ENCODE measurements at regions of chr5 and their contacts with region 1.

Region 1: DNA sequence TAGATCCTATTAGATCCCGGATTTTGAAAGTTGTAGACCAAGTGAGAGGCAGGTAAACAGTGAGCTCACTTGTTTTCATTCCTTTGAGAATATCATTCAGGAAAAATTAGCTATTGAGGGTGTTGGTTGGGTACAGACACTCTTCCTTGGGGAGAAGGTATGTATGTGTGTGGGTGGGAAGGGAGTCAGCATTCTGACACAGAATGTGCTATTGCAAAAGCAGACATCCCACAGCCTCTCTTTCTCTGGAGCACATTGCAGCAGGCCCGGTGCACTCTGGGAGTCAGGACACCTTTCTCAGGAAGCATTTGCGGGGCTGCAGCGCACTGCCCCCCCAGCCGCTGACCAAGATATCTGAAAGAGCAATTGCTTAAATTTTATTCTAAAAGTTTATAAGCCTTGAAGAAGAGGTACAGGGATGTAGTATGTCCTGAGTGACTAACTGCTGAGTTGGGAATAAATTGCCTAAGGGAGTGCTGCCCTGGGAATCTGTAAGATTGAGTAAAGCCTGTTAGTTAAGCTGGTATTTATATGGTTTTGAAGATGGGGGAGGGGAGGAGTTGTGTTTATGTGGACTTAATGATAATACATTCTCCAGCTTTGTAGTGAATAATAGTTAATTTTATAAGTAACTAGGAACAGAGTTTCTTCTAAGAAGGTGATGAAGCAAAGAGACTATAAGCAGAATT is 5.2 kb downstream of the TNFAIP8 start:
- DNase-seq: no peak
- CTCF ChIP-seq: no peak

Region 2: DNA sequence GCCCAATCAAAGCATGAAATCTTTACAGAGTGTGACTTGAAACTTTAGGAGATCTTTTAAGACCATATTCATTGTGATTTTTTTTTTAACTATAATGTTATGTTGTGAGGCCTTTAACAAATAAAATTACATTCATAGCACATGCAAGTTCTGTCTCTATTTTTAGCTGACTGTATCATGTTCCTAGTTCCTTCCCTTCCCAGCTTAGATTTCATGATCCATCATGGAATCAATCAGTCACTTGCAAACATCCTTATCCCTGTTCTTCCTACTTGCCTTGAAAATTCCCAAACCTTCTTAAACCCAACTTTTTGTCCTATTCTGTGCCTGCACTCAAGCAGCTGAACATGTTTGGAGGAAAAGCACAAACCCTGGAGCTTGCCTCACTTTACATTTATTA is 148.4 kb before region 1 on chr5:
- CTCF ChIA-PET with region 1: no interaction called
- POLR2A ChIA-PET with region 1: interaction called, 10 read pairs
- DNase-seq: no peak
- CTCF ChIP-seq: no peak

Region 3: DNA sequence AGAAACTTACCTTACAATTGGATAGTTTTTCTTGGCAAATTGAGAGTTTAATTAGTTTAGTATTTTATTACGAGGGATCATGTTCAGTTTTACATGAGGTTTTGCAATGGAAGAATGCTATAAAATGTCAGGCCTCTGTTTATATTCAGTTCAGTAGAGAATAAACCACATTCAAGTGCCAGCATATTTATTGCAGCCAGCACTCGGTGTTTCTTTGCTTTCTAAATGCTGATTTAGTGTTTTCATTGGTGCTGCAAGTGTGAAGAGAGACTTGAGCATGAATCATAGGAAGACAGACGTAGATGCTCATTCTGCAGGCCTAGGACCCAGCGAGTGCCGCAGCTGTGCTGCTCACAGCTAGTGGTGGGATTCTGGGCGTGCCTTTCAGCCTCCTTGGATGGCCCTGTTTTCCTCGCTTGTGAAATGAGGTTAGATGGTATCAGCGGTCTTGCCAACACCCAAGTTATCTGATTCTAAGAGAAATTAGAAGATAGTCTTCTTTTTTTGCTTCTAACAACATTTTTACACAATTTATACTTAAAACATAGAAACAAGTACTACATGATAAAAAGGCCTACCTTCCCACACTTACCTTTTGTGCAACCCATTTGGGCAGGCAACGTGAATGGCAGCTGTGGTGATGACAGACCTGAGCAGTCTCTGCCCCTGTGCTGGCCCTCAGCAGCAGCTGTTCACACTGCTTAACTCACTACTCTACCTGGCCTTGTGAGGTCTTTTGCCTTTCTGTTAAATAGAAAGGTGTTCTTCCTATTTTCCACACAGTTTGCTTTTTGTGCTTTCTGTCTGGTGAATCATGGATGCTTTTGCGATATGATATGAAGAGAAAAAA is 32.1 kb before region 1 on chr5:
- CTCF ChIA-PET with region 1: interaction called, 10 read pairs
- POLR2A ChIA-PET with region 1: interaction called, 4 read pairs
- DNase-seq: no peak
- CTCF ChIP-seq: no peak

Region 4: GRCh38 chr5:119373449-119373858 is 12.4 kb after region 1 on chr5:
- CTCF ChIA-PET with region 1: interaction called, 14 read pairs
- POLR2A ChIA-PET with region 1: no interaction called
- DNase-seq: no peak
- CTCF ChIP-seq: no peak

Region 5: GRCh38 chr5:119379942-119380547 is 19.0 kb after region 1 on chr5:
- CTCF ChIA-PET with region 1: interaction called, 10 read pairs
- POLR2A ChIA-PET with region 1: no interaction called
- DNase-seq: no peak
- CTCF ChIP-seq: no peak

Measured in GM10248 (cell line).